ENCODE measurements at regions of chr1 and their contacts with region 1.

Region 1: GRCh38 chr1:90274376-90274775 is 279.5 kb downstream of the ZNF326 start:
- DNase-seq: no peak
- ATAC-seq: no peak
- H3K4me3 ChIP-seq: no peak overlapping the region
- H3K27ac ChIP-seq: no peak overlapping the region
- H3K4me1 ChIP-seq: no peaks in the 10 kb centered on the region
- H3K27me3 ChIP-seq: no peaks in the 10 kb centered on the region
- CTCF ChIP-seq: no peak

Region 2: GRCh38 chr1:89945852-89946476 is 328.4 kb before region 1 on chr1:
- CTCF ChIA-PET with region 1: no interaction called
- POLR2A ChIA-PET with region 1: no interaction called
- in situ Hi-C with region 1: no loop called
- intact Hi-C with region 1: no loop called
- DNase-seq: no peak
- ATAC-seq: no peak
- H3K4me3 ChIP-seq: no peak overlapping the region
- H3K27ac ChIP-seq: no peak overlapping the region
- H3K4me1 ChIP-seq: no peaks in the 10 kb centered on the region
- H3K27me3 ChIP-seq: no peaks in the 10 kb centered on the region
- CTCF ChIP-seq: no peak

Region 3: DNA sequence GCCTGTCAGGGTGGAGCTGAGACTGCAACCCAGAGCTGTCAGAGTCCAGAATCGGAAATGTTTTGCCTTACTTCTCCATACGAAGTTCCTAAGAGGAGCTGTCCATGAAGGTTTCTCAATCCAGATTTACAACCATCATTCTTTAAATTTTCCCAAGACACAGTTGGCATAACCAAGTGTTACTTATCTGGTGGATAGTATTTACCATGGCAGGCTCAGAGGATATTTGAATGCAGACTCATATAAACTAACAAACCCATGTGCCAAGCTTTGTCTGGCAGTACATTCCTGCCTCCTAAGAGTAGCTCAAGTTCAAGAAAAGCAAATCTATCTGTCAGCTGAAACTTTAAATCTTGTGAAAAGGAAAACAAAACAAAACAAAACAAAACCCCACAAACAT is 11.6 kb before region 1 on chr1:
- CTCF ChIA-PET with region 1: no interaction called
- POLR2A ChIA-PET with region 1: no interaction called
- in situ Hi-C with region 1: no loop called
- intact Hi-C with region 1: loop called (anchors 2 kb)
- DNase-seq: no peak
- ATAC-seq: peak; percentile 42; the same call in 1 of the 2 replicates
- H3K4me3 ChIP-seq: no peak overlapping the region
- H3K27ac ChIP-seq: no peak overlapping the region
- H3K4me1 ChIP-seq: no peaks in the 10 kb centered on the region; the same call in 1 of the 2 replicates
- H3K27me3 ChIP-seq: no peaks in the 10 kb centered on the region
- CTCF ChIP-seq: no peak

Region 4: GRCh38 chr1:90309806-90310205 is 35.4 kb after region 1 on chr1:
- CTCF ChIA-PET with region 1: interaction called, 11 read pairs
- POLR2A ChIA-PET with region 1: no interaction called
- in situ Hi-C with region 1: no loop called
- intact Hi-C with region 1: no loop called
- DNase-seq: no peak
- ATAC-seq: no peak
- H3K4me3 ChIP-seq: no peak overlapping the region
- H3K27ac ChIP-seq: no peak overlapping the region
- H3K4me1 ChIP-seq: no peaks in the 10 kb centered on the region
- H3K27me3 ChIP-seq: no peaks in the 10 kb centered on the region
- CTCF ChIP-seq: no peak

Measured in Panc1 (cell line).